ENCODE measurements at regions of chr12 and their contacts with region 1.

Region 1: DNA sequence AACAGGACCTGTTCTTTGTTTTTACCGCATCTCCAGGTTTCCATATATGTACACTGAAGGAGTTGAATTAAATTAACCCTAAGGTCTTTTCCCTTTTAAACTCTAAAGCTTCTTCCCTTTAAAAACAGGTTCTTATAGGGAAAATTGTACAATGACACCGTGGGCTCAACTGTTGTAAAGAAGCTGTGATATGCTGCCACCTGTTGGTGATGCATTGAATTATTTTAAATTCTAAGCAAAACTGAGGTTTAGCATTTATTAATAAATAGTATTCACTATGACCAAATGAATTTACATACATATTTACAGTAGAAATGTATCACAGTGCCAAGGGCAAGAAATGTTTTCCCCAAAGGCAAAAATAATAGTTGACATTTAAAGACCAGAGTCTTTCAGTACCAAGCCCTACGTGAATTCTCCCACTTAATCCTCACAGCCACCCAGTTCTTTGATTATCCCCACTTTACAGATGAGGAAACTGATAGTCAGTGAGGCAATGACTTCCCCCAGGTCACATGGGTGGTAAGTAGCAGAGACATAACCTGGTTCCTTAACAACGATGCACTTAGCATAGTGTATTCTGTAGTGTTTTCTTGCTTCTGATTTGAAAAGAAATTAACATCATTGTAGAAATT is 35.7 kb upstream of the TMEM263 start:
- DNase-seq: no peak
- ATAC-seq: no peak
- H3K4me3 ChIP-seq: no peak overlapping the region
- H3K27ac ChIP-seq: no peak overlapping the region
- H3K4me1 ChIP-seq: no peaks in the 10 kb centered on the region
- H3K27me3 ChIP-seq: no peaks in the 10 kb centered on the region; the same call in 1 of the 2 replicates
- CTCF ChIP-seq: peak; percentile 77; the same call in 1 of the 2 replicates

Region 2: DNA sequence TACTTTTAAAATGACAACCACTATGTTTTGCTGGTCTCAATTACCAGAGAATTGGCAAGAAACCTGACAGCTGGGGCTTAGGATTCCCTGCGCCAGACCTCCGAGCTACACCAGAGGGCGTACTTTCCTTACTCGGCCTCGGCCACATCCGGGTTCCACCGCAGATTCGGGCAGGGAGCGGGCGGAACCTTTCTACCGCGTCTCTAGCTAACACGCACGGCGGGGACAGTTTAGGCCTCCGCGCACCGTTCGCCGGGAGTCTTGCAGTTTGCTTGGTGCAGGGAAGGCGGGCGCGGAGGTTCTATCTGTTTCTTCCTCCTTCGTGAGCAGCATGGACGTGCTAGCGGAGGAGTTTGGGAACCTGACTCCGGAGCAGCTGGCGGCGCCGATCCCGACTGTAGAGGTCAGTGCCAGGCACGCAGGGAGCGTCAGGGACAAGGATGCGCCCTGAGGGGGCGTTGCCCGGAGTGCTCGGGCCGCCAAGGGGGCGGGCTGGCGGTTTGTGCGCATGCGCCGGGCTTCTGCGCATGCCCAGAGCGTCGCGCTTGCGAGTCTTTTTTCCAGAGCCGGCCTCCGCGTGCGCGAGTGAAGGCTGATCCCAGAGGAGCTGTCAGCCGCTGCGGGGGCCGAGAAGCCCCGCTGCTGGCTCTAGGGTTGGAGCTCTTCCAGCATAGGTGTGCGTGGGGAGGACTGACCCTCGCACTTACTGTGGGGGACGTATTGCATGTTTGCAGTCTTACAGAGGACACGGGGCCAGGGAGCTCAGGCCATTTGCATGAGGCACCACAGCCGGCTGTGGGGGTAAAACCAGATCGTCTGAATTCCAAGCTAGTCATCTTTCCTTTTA is 562.3 kb before region 1 on chr12 and contains the start of gene POLR3B:
- CTCF ChIA-PET with region 1: interaction called, 5 read pairs
- POLR2A ChIA-PET with region 1: no interaction called
- in situ Hi-C with region 1: no loop called
- intact Hi-C with region 1: loop called (anchors 10 kb)
- DNase-seq: peak; percentile 79
- ATAC-seq: peak; percentile 96
- H3K4me3 ChIP-seq: peak within 1 kb of the TSS; percentile 74 to 92
- H3K27ac ChIP-seq: peak within 1 kb of the TSS; percentile 84
- H3K4me1 ChIP-seq: peaks cover 9% of the 10 kb centered on the region; the same call in 1 of the 2 replicates
- H3K27me3 ChIP-seq: 0 out of 2 replicates have a peak, but pooled peaks cover 2% of the 10 kb centered on the region
- CTCF ChIP-seq: peak; percentile 94
- total RNA-seq, gene POLR3B: 8.2 TPM

Region 3: GRCh38 chr12:106386813-106387535 is 533.1 kb before region 1 on chr12:
- CTCF ChIA-PET with region 1: no interaction called
- POLR2A ChIA-PET with region 1: no interaction called
- in situ Hi-C with region 1: no loop called
- intact Hi-C with region 1: loop called (anchors 1 kb)
- DNase-seq: no peak
- ATAC-seq: no peak
- H3K4me3 ChIP-seq: no peak overlapping the region
- H3K27ac ChIP-seq: no peak overlapping the region
- H3K4me1 ChIP-seq: no peaks in the 10 kb centered on the region
- H3K27me3 ChIP-seq: no peaks in the 10 kb centered on the region
- CTCF ChIP-seq: no peak

Region 4: DNA sequence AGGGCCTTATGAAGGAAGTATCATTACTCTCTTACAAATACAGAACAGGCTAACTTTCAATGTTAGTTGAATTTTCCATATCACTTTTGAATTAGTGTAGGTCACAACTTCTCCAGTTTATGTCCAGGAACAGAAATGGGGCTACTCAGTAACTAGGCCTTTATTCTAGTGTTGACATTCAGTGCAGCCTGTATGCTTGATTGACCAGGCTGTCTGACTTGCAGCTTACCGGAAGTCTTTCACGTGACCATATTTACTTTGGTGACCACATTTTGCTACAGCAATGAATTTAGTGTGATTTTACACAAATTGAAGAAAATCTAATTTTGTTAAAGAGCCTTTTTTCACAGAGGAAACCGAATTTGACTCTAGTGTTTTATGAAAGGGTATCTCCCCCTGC is 54.5 kb after region 1 on chr12:
- CTCF ChIA-PET with region 1: no interaction called
- POLR2A ChIA-PET with region 1: no interaction called
- in situ Hi-C with region 1: no loop called
- intact Hi-C with region 1: no loop called
- DNase-seq: no peak
- ATAC-seq: no peak
- H3K4me3 ChIP-seq: no peak overlapping the region
- H3K27ac ChIP-seq: no peak overlapping the region
- H3K4me1 ChIP-seq: peaks cover 10% of the 10 kb centered on the region
- H3K27me3 ChIP-seq: no peaks in the 10 kb centered on the region
- CTCF ChIP-seq: no peak